ENCODE measurements at regions of chr12 and their contacts with region 1.

Region 1: GRCh38 chr12:27434673-27435565 is 11.6 kb upstream of the SMCO2 start:
- H3K4me3 ChIP-seq: no peak overlapping the region
- H3K27ac ChIP-seq: no peak overlapping the region
- H3K4me1 ChIP-seq: peaks cover 2% of the 10 kb centered on the region; the same call in 1 of the 2 replicates
- CTCF ChIP-seq: no peak

Region 2: GRCh38 chr12:27424631-27425230 is 10.2 kb before region 1 on chr12:
- CTCF ChIA-PET with region 1: interaction called, 36 read pairs
- POLR2A ChIA-PET with region 1: no interaction called
- H3K4me3 ChIP-seq: no peak overlapping the region
- H3K27ac ChIP-seq: no peak overlapping the region
- H3K4me1 ChIP-seq: no peaks in the 10 kb centered on the region; the same call in 1 of the 2 replicates
- CTCF ChIP-seq: 0 out of 2 replicates have a peak, but pooled peaks have one; percentile 21

Region 3: GRCh38 chr12:27635349-27635972 is 200.5 kb after region 1 on chr12:
- CTCF ChIA-PET with region 1: interaction called, 28 read pairs
- POLR2A ChIA-PET with region 1: no interaction called
- H3K4me3 ChIP-seq: no peak overlapping the region
- H3K27ac ChIP-seq: no peak overlapping the region
- H3K4me1 ChIP-seq: no peaks in the 10 kb centered on the region
- CTCF ChIP-seq: peak; percentile 34; the same call in 1 of the 2 replicates